Activated CD4-positive, alpha-beta memory T cell treated with anti-CD3 and anti-CD28 coated beads, Interleukin-2, amount 10 ng/mL, durations not matched to agents 7 days and 5 days (primary cell): ENCODE measurements at regions of chr2 and their contacts with region 1.

Region 1: GRCh38 chr2:130884503-130884902 is 47.8 kb downstream of the ARHGEF4 start:
- DNase-seq: no peak
- H3K4me3 Mint-ChIP-seq: no peak overlapping the region
- H3K27ac Mint-ChIP-seq: no peak overlapping the region
- H3K4me1 Mint-ChIP-seq: no peaks in the 10 kb centered on the region
- H3K27me3 Mint-ChIP-seq: peaks cover 10% of the 10 kb centered on the region

Region 2: DNA sequence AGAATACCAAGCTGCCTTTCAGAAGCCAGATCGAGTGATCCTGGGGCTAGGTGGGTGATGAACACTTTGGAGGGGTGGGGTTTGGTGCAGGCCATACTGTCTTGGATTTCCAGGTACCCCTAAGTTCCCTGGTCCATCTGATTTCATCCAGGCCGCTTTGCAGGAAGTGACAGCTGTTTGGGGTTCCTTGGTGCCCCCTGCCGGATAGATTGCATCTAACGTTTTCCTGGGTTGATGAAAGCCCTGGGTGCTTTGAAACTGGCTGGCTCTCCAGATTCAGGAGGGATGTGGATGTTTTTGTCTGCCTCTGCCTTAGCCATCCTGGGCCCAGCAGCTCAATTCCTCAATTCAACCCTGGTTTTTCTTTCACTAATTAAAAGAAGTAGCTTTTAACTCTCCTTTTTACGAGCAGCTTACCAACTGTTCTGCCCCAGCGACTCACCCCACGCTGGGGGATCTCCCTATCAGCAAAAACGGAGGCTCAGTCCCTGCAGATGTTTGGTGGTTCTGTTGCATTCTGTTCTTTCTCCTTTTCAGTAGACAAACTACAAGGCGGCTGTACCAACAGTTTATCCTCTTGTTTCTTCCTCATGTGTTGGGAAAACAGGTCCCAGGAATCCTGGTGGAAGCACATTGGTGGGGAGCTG is 10.7 kb before region 1 on chr2:
- CTCF ChIA-PET with region 1: interaction called, 11 read pairs
- POLR2A ChIA-PET with region 1: no interaction called
- DNase-seq: peak; percentile 77
- H3K4me3 Mint-ChIP-seq: no peak overlapping the region
- H3K27ac Mint-ChIP-seq: no peak overlapping the region
- H3K4me1 Mint-ChIP-seq: no peaks in the 10 kb centered on the region
- H3K27me3 Mint-ChIP-seq: peaks cover 17% of the 10 kb centered on the region

Region 3: GRCh38 chr2:131094463-131095281 is 210.2 kb after region 1 on chr2:
- CTCF ChIA-PET with region 1: no interaction called
- POLR2A ChIA-PET with region 1: no interaction called
- DNase-seq: no peak
- H3K4me3 Mint-ChIP-seq: peak overlapping the region; percentile 87
- H3K27ac Mint-ChIP-seq: peak overlapping the region; percentile 91
- H3K4me1 Mint-ChIP-seq: peaks cover 19% of the 10 kb centered on the region
- H3K27me3 Mint-ChIP-seq: peaks cover 2% of the 10 kb centered on the region